Activated CD4-positive, alpha-beta T cell treated with anti-CD3 and anti-CD28 coated beads, Interleukin-2, amount 10 ng/mL, durations not matched to agents 24 days and 14 days (primary cell): ENCODE measurements at regions of chr14 and their contacts with region 1.

Region 1: GRCh38 chr14:91872517-91873470 is 5.5 kb upstream of the TC2N start:
- DNase-seq: peak; percentile 82
- H3K4me3 Mint-ChIP-seq: peak overlapping the region; percentile 89
- H3K27ac Mint-ChIP-seq: peak overlapping the region; percentile 91
- H3K4me1 Mint-ChIP-seq: peaks cover 90% of the 10 kb centered on the region
- H3K27me3 Mint-ChIP-seq: no peaks in the 10 kb centered on the region

Region 2: DNA sequence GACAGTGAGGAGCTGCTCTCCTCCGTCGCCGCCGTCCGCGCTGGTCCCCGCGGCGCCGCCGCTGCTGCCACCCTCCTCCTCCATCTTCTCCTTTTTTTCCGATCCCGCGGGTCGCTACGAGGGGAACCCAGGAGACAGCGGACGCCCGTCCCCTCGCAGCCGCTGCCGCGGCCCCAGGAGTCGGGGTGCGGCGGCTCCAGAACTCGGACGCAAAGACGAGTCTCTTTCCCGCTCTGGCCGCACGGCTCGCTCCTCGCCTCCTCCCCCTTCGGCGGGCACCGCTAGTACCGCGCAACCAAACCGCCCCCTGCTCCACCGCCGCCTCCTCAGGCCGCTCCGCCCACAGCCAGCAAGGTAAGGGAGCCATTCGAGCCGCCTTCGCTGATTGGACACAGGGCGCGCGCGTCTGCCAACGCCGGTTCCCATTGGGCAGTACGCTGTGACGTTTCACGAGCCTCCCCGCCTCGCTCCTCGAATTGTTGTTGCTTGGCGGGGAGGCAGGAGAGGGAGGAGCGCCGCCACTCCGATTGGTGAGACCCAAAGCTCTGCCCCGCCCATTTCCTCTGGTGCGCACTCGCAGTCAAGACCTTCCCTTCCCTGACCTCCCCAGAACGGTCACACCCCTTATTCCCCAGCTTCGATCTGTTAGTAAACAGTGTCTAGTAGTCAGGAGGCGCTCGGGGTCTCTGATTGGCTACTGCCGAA is 812.3 kb before region 1 on chr14 and contains the start of gene RPS6KA5:
- intact Hi-C with region 1: no loop called
- DNase-seq: peak; percentile 100
- H3K4me3 Mint-ChIP-seq: peak within 1 kb of the TSS; percentile 85
- H3K27ac Mint-ChIP-seq: peak within 1 kb of the TSS; percentile 76
- H3K4me1 Mint-ChIP-seq: peaks cover 51% of the 10 kb centered on the region
- H3K27me3 Mint-ChIP-seq: no peaks in the 10 kb centered on the region
- total RNA-seq, gene RPS6KA5: 13.5 and 13.8 TPM in 2 replicates

Region 3: DNA sequence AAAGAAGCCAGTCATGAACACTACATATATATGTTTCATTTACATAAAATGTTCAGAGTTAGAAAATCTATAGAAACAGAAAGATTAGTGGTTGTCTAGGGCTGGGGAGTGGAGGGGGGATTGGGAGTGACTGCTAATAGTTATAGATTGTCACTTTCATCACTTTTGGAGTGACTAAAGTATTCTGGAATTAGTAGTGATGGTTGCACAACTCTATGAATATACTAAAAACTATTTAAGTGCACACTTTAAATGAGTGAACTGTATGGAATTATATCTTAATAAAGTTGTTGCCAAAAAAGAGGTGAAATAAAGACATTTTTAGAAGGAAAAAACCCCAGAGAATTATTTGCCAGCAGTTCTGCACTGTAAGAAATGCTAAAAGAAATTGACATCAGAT is 150.4 kb before region 1 on chr14:
- intact Hi-C with region 1: no loop called
- DNase-seq: no peak
- H3K4me3 Mint-ChIP-seq: no peak overlapping the region
- H3K27ac Mint-ChIP-seq: no peak overlapping the region
- H3K4me1 Mint-ChIP-seq: no peaks in the 10 kb centered on the region
- H3K27me3 Mint-ChIP-seq: no peaks in the 10 kb centered on the region

Region 4: DNA sequence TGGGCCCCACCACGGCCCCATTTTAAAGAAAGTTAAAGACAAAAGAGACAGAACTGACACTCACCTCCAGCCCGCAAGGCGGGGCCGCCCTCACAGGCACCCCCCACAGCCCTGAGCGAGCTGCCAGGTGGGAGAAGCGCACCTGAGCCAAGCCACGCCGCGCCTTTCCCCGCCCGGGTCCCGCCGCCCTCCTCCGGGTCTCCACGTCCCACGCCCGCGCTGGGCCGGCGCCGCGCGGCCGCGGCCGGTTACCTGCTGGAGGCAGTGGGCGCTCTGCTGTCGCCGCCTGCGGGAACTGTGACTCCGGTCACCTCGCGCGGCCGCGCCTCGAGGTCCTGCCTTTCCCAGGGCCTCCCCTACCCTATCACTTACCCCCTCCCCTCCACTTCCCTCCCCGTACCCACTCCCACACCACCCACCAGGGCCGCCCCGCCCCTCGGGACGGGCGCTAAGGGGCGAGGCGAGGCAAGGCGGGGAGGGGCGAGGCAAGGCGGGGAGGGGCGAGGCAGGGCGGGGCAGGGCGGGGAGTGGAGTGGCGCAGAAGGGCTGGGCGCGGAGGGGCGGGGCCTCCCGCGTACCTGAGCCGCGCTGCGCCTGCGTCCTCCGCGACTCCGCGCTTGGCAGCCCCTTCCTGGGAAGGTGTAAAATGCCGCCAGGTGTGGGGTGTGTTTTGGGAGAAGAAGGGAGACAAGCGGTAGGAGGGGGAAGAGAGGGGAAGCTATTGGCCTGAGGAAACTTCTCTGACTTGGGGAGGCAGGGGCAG is 36.5 kb before region 1 on chr14:
- intact Hi-C with region 1: loop called (anchors 2 kb)
- DNase-seq: peak; percentile 89
- H3K4me3 Mint-ChIP-seq: peak overlapping the region; percentile 93
- H3K27ac Mint-ChIP-seq: peak overlapping the region; percentile 68
- H3K4me1 Mint-ChIP-seq: peaks cover 52% of the 10 kb centered on the region
- H3K27me3 Mint-ChIP-seq: peaks cover 11% of the 10 kb centered on the region

Region 5: GRCh38 chr14:91861091-91861490 is 11.7 kb before region 1 on chr14:
- intact Hi-C with region 1: loop called (anchors 1 kb)
- DNase-seq: peak; percentile 67
- H3K4me3 Mint-ChIP-seq: peak overlapping the region; percentile 88
- H3K27ac Mint-ChIP-seq: peak overlapping the region; percentile 98
- H3K4me1 Mint-ChIP-seq: peaks cover 70% of the 10 kb centered on the region
- H3K27me3 Mint-ChIP-seq: no peaks in the 10 kb centered on the region

Region 6: GRCh38 chr14:91893007-91893406 is 20.2 kb after region 1 on chr14:
- intact Hi-C with region 1: loop called (anchors 1 kb)
- DNase-seq: peak; percentile 75
- H3K4me3 Mint-ChIP-seq: no peak overlapping the region
- H3K27ac Mint-ChIP-seq: peak overlapping the region; percentile 46
- H3K4me1 Mint-ChIP-seq: peaks cover 32% of the 10 kb centered on the region
- H3K27me3 Mint-ChIP-seq: no peaks in the 10 kb centered on the region

Region 7: DNA sequence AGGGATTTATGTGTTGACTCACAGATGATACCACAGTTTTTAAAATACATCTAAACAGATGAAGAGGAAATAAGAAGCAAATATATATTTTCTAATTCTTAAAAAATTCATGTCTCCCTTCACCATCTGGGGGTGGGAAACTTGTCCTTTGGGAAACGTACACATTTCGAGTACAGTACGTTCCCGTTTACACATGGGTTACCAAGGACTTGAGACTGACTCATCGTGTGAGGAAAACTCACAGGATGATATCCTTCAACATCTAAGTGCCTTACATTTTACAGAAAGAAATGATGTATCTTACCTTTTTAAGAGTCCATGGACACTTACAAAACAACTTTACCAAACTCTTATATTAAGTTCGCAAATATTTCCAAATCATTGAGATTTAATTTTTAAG is 90.7 kb after region 1 on chr14:
- intact Hi-C with region 1: loop called (anchors 5 kb)
- DNase-seq: no peak
- H3K4me3 Mint-ChIP-seq: no peak overlapping the region
- H3K27ac Mint-ChIP-seq: no peak overlapping the region
- H3K4me1 Mint-ChIP-seq: peaks cover 8% of the 10 kb centered on the region
- H3K27me3 Mint-ChIP-seq: no peaks in the 10 kb centered on the region